ENCODE measurements at regions of chr16 and their contacts with region 1.

Region 1: DNA sequence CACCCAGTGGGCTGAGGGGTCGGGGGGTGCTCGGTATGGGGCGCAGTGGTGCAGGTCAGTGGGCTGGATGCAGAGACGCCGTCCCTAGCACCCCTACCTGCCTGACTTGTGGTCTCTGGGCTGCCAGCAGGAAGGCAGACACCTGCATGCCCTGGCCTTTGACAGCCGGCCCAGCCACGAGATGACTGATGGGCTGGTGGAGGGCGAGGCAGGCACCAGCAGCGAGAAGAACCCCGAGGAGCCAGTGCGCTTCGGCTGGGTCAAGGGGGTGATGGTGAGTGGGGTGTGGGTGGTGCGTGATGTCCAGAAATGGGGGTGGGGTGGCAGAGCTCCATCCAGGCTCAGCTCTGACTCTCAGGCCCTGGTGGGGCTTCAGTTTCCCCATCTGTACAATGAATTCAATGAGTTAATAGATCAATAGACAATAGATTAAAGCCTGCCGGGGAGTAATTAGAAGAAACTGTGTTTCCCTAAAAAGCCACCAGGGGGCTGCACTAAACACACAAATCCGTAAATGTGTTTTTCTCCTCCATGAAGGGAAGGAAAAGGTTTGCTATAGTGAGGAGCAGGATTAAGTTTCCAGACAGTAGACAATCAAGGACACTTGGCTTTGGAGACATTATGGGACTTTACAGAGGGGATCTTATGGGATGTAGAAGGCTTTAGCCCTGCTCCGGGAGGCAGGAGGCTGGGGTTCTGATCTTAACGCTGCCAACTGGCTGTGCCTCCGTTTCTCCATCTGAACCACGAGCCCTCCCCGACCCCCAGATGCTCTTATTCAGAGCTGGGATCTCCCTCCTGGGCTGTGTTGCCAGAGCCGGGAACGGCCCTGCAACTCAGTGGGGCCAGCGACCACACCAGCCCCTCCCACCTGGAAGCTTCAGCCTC is 2.2 kb downstream of the SLC12A3 start:
- DNase-seq: peak; percentile 57
- H3K4me3 ChIP-seq: no peak overlapping the region
- CTCF ChIP-seq: peak; percentile 72

Region 2: DNA sequence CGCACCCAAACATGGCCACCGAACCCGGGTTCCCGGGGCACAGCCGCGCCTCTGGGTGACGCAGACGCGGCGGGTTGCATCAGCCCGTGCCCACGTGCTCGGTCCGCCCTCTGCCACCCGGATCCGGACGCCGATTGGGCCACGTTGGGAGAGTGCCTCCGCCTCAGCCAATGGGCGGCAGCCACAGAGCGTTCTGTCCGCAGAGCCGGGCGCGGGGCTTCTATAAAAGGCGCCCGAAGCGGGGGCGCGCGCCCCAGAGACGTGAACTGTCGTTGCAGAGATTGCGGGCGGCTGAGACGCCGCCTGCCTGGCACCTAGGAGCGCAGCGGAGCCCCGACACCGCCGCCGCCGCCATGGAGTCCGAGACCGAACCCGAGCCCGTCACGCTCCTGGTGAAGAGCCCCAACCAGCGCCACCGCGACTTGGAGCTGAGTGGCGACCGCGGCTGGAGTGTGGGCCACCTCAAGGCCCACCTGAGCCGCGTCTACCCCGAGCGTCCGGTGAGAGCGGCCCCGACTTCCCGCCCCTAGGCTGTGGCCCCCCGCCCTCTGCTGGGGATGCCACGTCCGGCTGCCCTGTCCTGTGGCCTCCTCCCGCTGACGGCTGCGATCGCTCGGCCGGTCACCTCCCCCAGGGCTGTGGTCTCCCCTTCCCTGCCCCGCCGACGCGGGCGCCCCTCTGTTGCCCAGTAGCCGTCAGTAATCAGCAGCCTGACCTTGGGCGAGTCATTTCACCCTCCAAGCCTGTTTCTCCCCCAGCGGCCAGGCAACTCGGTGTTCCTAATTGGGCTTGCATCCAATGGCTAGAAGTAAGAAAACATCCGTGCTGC is 64.9 kb after region 1 on chr16 and contains the start of gene HERPUD1:
- in situ Hi-C with region 1: loop called (anchors 5 kb)
- DNase-seq: peak; percentile 89
- H3K4me3 ChIP-seq: peak within 1 kb of the TSS; percentile 99
- CTCF ChIP-seq: peak; percentile 6